Panc1 (cell line): ENCODE measurements at regions of chr1 and their contacts with region 1.

Region 1: GRCh38 chr1:26822737-26823395 is 3.6 kb upstream of the ZDHHC18 start:
- DNase-seq: no peak
- ATAC-seq: no peak
- H3K4me3 ChIP-seq: no peak overlapping the region
- H3K27ac ChIP-seq: no peak overlapping the region
- H3K4me1 ChIP-seq: peaks cover 8% of the 10 kb centered on the region
- H3K27me3 ChIP-seq: no peaks in the 10 kb centered on the region
- CTCF ChIP-seq: no peak

Region 2: GRCh38 chr1:26780344-26780957 is 42.4 kb before region 1 on chr1:
- CTCF ChIA-PET with region 1: no interaction called
- POLR2A ChIA-PET with region 1: no interaction called
- in situ Hi-C with region 1: no loop called
- intact Hi-C with region 1: no loop called
- DNase-seq: no peak
- ATAC-seq: 0 out of 2 replicates have a peak, but pooled peaks have one; percentile 7
- H3K4me3 ChIP-seq: no peak overlapping the region
- H3K27ac ChIP-seq: no peak overlapping the region
- H3K4me1 ChIP-seq: peaks cover 40% of the 10 kb centered on the region
- H3K27me3 ChIP-seq: no peaks in the 10 kb centered on the region
- CTCF ChIP-seq: no peak

Region 3: GRCh38 chr1:26811057-26811456 is 11.8 kb before region 1 on chr1:
- CTCF ChIA-PET with region 1: interaction called, 10 read pairs
- POLR2A ChIA-PET with region 1: no interaction called
- in situ Hi-C with region 1: no loop called
- intact Hi-C with region 1: no loop called
- DNase-seq: no peak
- ATAC-seq: no peak
- H3K4me3 ChIP-seq: no peak overlapping the region
- H3K27ac ChIP-seq: no peak overlapping the region
- H3K4me1 ChIP-seq: no peaks in the 10 kb centered on the region
- H3K27me3 ChIP-seq: no peaks in the 10 kb centered on the region
- CTCF ChIP-seq: no peak